GM12878 (cell line): ENCODE measurements at regions of chr15 and their contacts with region 1.

Region 1: DNA sequence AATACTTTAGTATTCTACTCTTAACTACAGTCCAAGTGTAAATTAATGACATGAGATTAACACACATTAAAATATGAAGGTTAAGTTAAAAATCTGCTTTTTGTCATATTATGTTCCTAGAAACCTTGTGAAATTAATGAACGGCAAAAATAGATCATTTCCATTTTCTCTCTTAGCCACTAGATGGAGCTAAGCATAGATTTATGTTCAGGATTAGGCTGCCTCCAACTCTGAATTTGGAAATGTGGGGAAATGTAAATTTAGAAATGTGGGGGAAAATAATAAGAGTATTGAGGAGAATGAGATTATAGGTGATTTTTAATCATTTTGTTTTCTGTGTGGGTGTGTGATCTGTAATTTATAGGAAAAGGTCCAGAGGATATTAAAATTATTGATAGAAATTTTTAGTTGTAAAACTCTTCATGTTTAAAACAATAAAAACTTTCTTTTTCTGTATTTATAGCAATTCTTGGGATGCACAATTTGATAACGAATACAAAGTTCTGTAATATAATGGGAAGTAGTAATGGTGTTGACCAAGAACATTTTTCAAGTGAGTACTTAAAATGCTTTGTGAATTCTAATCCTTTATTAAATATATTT is 59.2 kb downstream of the TMOD3 start:
- DNase-seq: no peak
- ATAC-seq: peak; percentile 54
- H3K4me3 ChIP-seq: no peak overlapping the region
- H3K27ac ChIP-seq: no peak overlapping the region
- H3K4me1 ChIP-seq: no peaks in the 10 kb centered on the region
- H3K27me3 ChIP-seq: no peaks in the 10 kb centered on the region
- CTCF ChIP-seq: peak; percentile 61 to 73 (median 67)
- EP300 ChIP-seq: no peak
- POLR2A ChIP-seq: no peak
- RAD21 ChIP-seq: peak; percentile 57

Region 2: GRCh38 chr15:51681303-51681963 is 207.3 kb before region 1 on chr15 and contains the start of gene SCG3:
- CTCF ChIA-PET with region 1: no interaction called
- POLR2A ChIA-PET with region 1: no interaction called
- RAD21 ChIA-PET with region 1: no interaction called
- SMC1A ChIA-PET with region 1: no interaction called
- in situ Hi-C with region 1: no loop called
- intact Hi-C with region 1: no loop called
- DNase-seq: no peak
- ATAC-seq: peak; percentile 51
- H3K4me3 ChIP-seq: no peak within 1 kb of the TSS
- H3K27ac ChIP-seq: no peak within 1 kb of the TSS
- H3K4me1 ChIP-seq: no peaks in the 10 kb centered on the region
- H3K27me3 ChIP-seq: peaks cover 0 to 3% of the 10 kb centered on the region in 2 experiments; a peak in 1 of 4 replicates
- CTCF ChIP-seq: no peak
- EP300 ChIP-seq: no peak
- POLR2A ChIP-seq: no peak
- RAD21 ChIP-seq: no peak
- polyA plus RNA-seq, gene SCG3: not detected

Region 3: GRCh38 chr15:51842852-51843737 is 45.6 kb before region 1 on chr15:
- CTCF ChIA-PET with region 1: interaction called, 13 read pairs
- POLR2A ChIA-PET with region 1: no interaction called
- RAD21 ChIA-PET with region 1: no interaction called
- SMC1A ChIA-PET with region 1: interaction called, 4 read pairs
- in situ Hi-C with region 1: no loop called
- intact Hi-C with region 1: no loop called
- DNase-seq: no peak
- ATAC-seq: peak; percentile 82
- H3K4me3 ChIP-seq: no peak overlapping the region
- H3K27ac ChIP-seq: peak overlapping the region; percentile 47
- H3K4me1 ChIP-seq: peaks cover 30% of the 10 kb centered on the region
- H3K27me3 ChIP-seq: no peaks in the 10 kb centered on the region
- CTCF ChIP-seq: no peak
- EP300 ChIP-seq: no peak
- POLR2A ChIP-seq: no peak
- RAD21 ChIP-seq: no peak

Region 4: DNA sequence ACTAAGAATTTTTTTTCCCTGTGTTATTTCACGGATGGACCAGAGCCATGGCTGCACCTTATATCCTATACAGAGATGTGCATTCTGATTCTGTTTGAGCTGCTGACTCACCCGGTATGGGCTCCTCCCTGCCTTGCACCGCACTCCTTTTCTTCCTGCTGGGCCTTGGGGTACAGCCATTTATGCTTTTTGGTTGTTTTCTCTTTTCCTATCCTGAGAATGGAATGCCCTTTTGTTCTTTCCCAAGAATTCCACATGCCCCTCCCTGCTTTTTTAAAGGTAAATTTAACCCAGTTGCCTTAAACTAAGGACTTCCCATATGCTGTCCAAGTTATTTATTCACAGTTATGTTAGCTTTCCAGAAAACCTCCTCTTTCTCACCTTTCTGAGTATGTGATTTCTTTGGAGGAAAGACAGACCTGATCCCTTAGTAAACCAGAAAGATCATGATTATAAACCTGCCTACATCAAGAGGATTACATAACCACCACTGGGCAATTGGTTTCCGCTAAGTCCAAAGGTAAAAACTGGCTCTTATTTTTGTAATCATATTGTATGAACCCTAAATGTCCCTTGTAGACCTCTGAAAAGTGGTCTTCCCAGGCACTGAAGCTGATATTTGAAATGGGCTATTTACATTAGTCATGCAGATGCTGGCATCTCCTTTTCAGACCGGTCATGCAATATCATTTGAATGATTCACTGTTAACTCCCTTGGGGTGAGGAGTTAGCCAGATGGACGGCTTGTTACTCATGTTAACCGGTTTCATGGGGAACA is 13.8 kb before region 1 on chr15:
- CTCF ChIA-PET with region 1: interaction called, 22 read pairs
- POLR2A ChIA-PET with region 1: no interaction called
- RAD21 ChIA-PET with region 1: no interaction called
- SMC1A ChIA-PET with region 1: interaction called, 4 read pairs
- in situ Hi-C with region 1: no loop called
- intact Hi-C with region 1: no loop called
- DNase-seq: no peak
- ATAC-seq: no peak
- H3K4me3 ChIP-seq: no peak overlapping the region
- H3K27ac ChIP-seq: no peak overlapping the region
- H3K4me1 ChIP-seq: no peaks in the 10 kb centered on the region
- H3K27me3 ChIP-seq: no peaks in the 10 kb centered on the region
- CTCF ChIP-seq: no peak
- EP300 ChIP-seq: no peak
- POLR2A ChIP-seq: no peak
- RAD21 ChIP-seq: no peak

Region 5: DNA sequence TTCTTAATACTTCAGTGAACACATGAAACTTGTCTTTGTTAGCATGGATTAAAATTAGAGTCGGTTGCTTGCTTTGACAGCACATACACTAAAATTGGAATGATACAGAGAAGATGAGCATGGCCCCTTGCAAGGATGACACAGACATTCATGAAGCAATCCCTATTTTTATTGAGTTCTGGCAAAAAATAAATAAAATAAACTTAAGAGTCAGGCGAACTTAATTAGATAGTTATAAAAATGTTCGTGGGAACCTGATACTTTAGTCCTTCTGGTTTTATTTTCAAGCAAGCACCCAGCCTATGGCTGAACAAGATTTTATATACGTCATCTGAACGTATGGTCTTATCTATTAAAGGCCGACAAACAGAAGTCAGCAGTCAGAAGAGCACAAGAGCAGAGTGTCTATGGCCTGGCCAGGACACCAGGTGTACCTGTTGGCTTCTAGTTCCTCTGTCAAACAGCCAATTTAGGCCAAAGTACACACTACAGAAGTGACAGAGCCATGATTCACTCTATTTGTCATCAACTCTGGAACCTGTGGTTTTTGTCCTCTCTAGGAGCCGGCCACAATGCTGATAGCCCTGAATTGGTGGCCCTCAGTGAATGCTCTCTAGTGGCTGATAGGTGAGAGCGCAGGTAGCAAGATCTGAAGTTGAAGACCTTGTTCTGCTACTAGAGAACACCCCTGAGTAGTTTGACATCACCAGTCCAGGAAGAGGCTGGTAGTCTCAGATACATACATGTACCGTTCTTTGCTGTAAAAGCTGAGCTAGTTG is 18.6 kb after region 1 on chr15:
- CTCF ChIA-PET with region 1: interaction called, 21 read pairs
- POLR2A ChIA-PET with region 1: no interaction called
- RAD21 ChIA-PET with region 1: no interaction called
- SMC1A ChIA-PET with region 1: interaction called, 4 read pairs
- in situ Hi-C with region 1: no loop called
- intact Hi-C with region 1: no loop called
- DNase-seq: no peak
- ATAC-seq: no peak
- H3K4me3 ChIP-seq: no peak overlapping the region
- H3K27ac ChIP-seq: no peak overlapping the region
- H3K4me1 ChIP-seq: no peaks in the 10 kb centered on the region
- H3K27me3 ChIP-seq: no peaks in the 10 kb centered on the region
- CTCF ChIP-seq: 0 out of 6 replicates have a peak, but pooled peaks of 1 of the 3 experiments have one; percentile 4
- EP300 ChIP-seq: no peak
- POLR2A ChIP-seq: no peak
- RAD21 ChIP-seq: no peak

Region 6: DNA sequence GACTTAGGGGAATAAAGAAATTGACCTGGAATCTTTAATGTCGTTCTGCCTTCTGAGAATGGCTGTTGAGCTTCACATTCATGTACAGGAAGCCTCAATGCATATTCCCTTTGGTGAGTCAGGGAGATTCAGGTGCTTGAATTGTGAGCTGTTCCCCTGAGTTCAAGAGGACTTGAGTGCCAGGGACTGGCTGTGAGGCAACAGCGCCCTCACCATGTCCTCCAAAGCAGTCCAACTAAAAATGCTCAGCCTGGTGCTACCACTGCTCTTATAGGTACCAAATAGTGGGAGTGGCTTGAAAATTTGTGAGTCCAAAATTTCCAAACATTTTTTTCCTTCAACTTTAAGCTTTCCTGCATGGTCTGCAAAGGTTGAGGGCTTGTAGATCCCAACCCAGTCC is 28.8 kb after region 1 on chr15:
- CTCF ChIA-PET with region 1: interaction called, 13 read pairs
- POLR2A ChIA-PET with region 1: no interaction called
- RAD21 ChIA-PET with region 1: interaction called, 3 read pairs
- SMC1A ChIA-PET with region 1: no interaction called
- in situ Hi-C with region 1: no loop called
- intact Hi-C with region 1: no loop called
- DNase-seq: no peak
- ATAC-seq: peak; percentile 56
- H3K4me3 ChIP-seq: no peak overlapping the region
- H3K27ac ChIP-seq: no peak overlapping the region
- H3K4me1 ChIP-seq: no peaks in the 10 kb centered on the region
- H3K27me3 ChIP-seq: no peaks in the 10 kb centered on the region
- CTCF ChIP-seq: peak; percentile 30 to 37 (median 35); a peak in 4 of 6 replicates
- EP300 ChIP-seq: no peak
- POLR2A ChIP-seq: no peak
- RAD21 ChIP-seq: no peak

Region 7: DNA sequence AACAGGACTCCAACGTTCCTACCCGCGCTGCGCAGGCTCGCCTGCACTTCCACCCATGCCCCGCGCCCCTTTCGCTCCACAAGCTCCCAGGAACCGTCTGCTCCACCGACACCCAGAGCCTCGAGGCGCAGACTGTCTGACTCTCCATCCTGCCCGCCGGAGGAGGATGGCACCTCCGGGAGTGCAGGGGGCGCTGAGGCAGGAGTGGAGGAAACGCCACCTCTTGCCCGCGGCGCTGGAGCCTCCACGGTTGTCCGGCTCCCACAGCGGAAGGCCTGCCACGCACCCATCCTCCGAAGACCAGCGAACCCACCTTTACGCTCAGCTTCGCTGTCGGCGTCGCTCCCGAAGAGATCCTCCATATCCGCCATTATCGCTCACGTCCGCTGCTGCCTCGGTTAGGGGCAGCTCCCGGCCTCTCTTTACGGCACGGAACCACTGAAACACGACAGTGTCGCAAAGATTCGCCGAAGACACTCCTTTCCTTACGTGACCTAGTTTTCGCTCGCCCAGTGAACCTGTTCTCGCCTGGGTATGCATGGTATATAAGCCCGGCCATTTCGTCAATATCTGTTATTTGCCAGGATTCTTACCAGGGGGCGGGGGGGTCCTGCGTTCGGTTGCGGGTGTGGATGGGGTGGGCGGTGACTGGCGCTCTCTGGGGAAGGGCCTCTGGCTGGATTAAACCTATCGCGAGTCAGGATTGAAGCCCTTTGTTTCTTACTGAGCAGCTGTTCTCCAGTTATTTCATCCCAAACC is 82.9 kb after region 1 on chr15 and contains the start of gene LEO1:
- CTCF ChIA-PET with region 1: interaction called, 12 read pairs
- POLR2A ChIA-PET with region 1: no interaction called
- RAD21 ChIA-PET with region 1: interaction called, 3 read pairs
- SMC1A ChIA-PET with region 1: no interaction called
- in situ Hi-C with region 1: no loop called
- intact Hi-C with region 1: no loop called
- DNase-seq: peak; percentile 88
- ATAC-seq: peak; percentile 91
- H3K4me3 ChIP-seq: peak within 1 kb of the TSS; percentile 82
- H3K27ac ChIP-seq: peak within 1 kb of the TSS; percentile 83
- H3K4me1 ChIP-seq: no peaks in the 10 kb centered on the region
- H3K27me3 ChIP-seq: no peaks in the 10 kb centered on the region
- CTCF ChIP-seq: peak; percentile 18 to 42 (median 39); a peak in 4 of 6 replicates
- EP300 ChIP-seq: no peak
- POLR2A ChIP-seq: peak; percentile 94
- RAD21 ChIP-seq: 0 out of 2 replicates have a peak, but pooled peaks have one; percentile 0
- polyA plus RNA-seq, gene LEO1: 29.5 to 35.2 TPM

Region 8: GRCh38 chr15:52208306-52208946 is 319.7 kb after region 1 on chr15:
- CTCF ChIA-PET with region 1: interaction called, 9 read pairs
- POLR2A ChIA-PET with region 1: interaction called, 3 read pairs
- RAD21 ChIA-PET with region 1: interaction called, 13 read pairs
- SMC1A ChIA-PET with region 1: no interaction called
- in situ Hi-C with region 1: no loop called
- intact Hi-C with region 1: loop called (anchors 5 kb)
- DNase-seq: no peak
- ATAC-seq: peak; percentile 99
- H3K4me3 ChIP-seq: no peak overlapping the region
- H3K27ac ChIP-seq: no peak overlapping the region
- H3K4me1 ChIP-seq: no peaks in the 10 kb centered on the region
- H3K27me3 ChIP-seq: no peaks in the 10 kb centered on the region
- CTCF ChIP-seq: peak; percentile 84 to 89 (median 88)
- EP300 ChIP-seq: no peak
- POLR2A ChIP-seq: no peak
- RAD21 ChIP-seq: peak; percentile 71

Region 9: GRCh38 chr15:52503788-52504496 is 615.2 kb after region 1 on chr15:
- CTCF ChIA-PET with region 1: no interaction called
- POLR2A ChIA-PET with region 1: no interaction called
- RAD21 ChIA-PET with region 1: no interaction called
- SMC1A ChIA-PET with region 1: no interaction called
- in situ Hi-C with region 1: no loop called
- intact Hi-C with region 1: no loop called
- DNase-seq: peak; percentile 51
- ATAC-seq: peak; percentile 86
- H3K4me3 ChIP-seq: peak overlapping the region; percentile 39; the same call in 1 of the 2 replicates
- H3K27ac ChIP-seq: peak overlapping the region; percentile 62; the same call in 1 of the 2 replicates
- H3K4me1 ChIP-seq: peaks cover 6% of the 10 kb centered on the region
- H3K27me3 ChIP-seq: no peaks in the 10 kb centered on the region
- CTCF ChIP-seq: no peak
- EP300 ChIP-seq: no peak
- POLR2A ChIP-seq: no peak
- RAD21 ChIP-seq: no peak